ENCODE measurements at regions of chr22 and their contacts with region 1.

Region 1: DNA sequence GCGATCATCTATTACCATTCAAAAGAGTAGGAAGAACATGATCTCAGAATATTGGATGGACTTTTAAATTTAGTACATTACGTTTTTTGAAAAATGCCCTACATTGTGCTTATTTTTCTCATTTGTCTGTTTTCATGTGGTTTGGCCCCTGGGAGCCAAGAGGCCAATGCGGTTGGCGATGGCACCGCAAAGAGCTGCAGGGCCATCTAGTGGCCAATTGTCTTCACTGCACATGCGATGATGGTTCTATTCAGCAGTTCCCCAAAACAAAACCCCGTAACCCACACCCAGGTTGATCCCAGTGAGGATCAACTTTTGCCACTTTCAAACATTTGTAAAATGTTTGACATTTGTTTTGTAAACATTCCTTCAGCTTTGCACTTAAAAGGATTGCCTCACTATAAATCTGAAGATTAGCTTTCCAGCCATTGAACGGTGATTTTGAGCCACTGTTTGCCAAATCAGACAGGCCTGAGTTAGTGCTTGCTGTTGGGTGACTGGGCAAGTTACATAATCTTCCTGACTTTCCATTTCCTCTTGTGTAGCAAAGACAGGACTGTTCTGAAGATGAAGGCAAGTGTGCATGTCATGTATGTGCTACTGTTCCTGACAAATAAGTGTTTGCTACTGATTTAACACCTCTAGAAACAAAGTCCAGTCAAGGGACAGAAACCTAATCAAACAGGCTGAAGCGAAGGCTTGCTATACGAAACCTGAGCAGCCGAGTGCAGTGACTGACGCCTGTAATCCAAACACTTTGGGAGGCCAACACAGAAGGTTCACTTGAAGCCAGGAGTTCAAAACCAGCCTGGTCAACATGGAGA is 29.2 kb upstream of the XBP1 start:
- DNase-seq: peak; percentile 92
- ATAC-seq: peak; percentile 95

Region 2: GRCh38 chr22:28497188-28497587 is 332.4 kb before region 1 on chr22:
- intact Hi-C with region 1: no loop called
- DNase-seq: no peak
- ATAC-seq: no peak

Region 3: GRCh38 chr22:28600546-28601143 is 228.9 kb before region 1 on chr22:
- intact Hi-C with region 1: loop called (anchors 10 kb)
- DNase-seq: no peak
- ATAC-seq: peak; percentile 66